Astrocyte of the cerebellum (primary cell): ENCODE measurements at regions of chr12 and their contacts with region 1.

Region 1: DNA sequence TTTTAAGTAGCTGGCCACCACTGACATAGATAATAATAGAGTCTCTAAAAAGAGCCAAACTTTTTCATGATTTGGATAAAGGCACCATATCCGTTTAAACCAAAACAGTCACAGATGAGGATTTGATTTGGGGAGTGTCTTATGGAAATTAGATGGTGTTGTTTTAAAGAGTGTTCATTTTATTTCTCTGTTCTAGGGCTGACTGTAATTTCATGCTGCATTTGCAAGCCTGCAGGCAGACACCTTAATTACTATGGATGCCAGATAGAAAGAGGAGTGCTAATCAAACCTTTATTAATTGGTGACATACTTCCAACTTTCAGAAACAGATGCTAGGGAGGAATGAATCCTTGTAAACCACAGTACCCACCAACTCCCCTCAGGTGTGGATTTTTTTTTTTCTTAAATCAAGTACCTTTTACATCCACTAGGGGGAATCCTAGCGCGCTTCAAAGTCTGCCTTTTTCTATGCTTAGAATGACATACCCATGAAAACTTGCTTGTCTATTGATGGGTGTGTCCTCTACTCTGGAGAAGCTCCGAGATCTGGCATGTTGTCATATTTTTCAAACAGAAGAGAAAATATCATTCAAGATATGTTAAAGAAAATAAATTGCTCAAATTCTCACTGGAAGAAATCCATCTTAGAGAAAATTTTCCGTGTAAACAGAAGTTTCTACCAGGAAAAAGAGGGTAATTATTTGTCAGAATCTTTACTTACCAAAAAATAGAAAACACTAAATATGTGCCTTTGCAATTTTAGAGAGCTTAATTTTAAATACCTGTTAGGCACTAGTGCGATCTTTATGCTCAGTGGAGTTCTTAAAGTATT is 14.2 kb upstream of the PLXNC1 start:
- DNase-seq: peak; percentile 38
- H3K4me3 ChIP-seq: no peak overlapping the region
- CTCF ChIP-seq: peak; percentile 73

Region 2: GRCh38 chr12:94427501-94428381 is 293.6 kb after region 1 on chr12:
- in situ Hi-C with region 1: loop called (anchors 25 kb)
- DNase-seq: peak; percentile 85
- H3K4me3 ChIP-seq: no peak overlapping the region
- CTCF ChIP-seq: no peak

Region 3: DNA sequence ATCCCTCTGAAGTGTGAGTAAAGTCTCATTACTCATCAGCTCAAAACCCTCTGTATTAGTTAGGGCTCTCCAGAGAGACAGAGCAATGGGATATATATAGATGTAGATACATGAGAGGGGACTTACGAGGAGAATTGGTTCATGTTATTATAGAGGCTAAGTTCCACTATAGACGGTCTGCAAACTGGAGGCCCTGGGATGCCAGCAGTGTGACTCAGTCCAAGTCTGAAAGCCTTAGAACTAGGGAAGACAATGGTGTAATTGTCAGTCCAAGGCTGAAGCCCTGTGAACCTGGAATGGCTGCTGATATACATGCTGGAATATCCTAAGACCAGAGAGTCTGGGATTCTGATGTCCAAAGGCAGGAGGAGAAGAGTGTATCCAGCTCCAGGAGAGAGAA is 382.8 kb after region 1 on chr12:
- in situ Hi-C with region 1: loop called (anchors 25 kb)
- DNase-seq: no peak
- H3K4me3 ChIP-seq: no peak overlapping the region
- CTCF ChIP-seq: no peak